ENCODE measurements at regions of chr2 and their contacts with region 1.

Region 1: DNA sequence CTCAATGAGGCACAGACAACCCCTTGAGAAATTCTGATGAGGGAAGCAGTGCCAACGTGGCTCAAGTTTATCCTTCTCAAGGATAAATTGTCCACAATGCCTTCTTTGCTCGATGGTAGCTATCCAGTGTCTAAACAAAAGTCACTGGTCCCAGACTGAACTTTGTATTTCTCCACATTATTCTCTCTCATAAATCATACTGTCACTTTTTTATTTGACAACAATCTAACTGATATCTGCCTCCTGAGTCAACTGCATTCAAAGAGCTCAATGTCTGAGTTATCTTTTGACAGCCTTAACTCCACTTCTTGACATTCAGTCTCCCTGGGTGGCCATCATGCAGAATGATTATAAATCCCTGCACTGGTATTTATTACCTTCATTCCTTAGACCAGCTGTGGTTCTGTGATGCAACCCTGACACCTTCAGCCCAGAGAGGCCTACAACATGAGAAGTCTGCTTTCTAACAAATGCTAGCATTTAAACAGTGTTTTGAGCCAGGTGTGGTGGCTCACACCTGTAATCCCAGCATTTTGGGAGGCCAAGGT is 38.2 kb downstream of the IMMT start:
- DNase-seq: no peak
- H3K4me3 Mint-ChIP-seq: no peak overlapping the region
- H3K27ac Mint-ChIP-seq: no peak overlapping the region
- H3K4me1 Mint-ChIP-seq: no peaks in the 10 kb centered on the region
- H3K27me3 Mint-ChIP-seq: no peaks in the 10 kb centered on the region

Region 2: DNA sequence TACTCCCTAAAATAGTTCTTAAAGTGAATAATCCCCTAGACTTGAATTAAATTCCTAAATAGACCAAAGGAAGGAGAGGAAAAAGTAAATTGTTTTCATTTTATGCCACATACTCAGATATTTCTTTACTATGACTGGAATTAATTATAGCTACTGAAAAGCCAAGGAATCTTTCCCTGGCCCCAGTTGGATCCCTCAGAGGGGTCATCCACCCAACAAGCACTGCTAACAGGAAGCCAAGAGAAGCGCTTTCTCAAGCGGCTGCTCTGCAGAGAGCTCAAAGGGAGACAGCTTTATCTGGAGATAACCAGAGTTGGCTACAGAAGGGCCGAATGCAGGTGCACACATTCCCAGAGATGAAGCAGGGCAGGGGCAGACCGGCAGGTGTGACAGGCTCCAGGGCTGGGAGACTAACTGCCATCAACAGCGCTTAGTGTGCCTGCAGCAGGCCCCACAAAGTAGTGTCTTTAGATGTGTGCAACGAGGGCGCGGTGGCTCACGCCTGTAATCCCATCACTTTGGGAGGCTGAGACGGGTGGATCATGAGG is 102.5 kb before region 1 on chr2:
- intact Hi-C with region 1: no loop called
- DNase-seq: no peak
- H3K4me3 Mint-ChIP-seq: no peak overlapping the region
- H3K27ac Mint-ChIP-seq: no peak overlapping the region
- H3K4me1 Mint-ChIP-seq: no peaks in the 10 kb centered on the region
- H3K27me3 Mint-ChIP-seq: no peaks in the 10 kb centered on the region

Region 3: DNA sequence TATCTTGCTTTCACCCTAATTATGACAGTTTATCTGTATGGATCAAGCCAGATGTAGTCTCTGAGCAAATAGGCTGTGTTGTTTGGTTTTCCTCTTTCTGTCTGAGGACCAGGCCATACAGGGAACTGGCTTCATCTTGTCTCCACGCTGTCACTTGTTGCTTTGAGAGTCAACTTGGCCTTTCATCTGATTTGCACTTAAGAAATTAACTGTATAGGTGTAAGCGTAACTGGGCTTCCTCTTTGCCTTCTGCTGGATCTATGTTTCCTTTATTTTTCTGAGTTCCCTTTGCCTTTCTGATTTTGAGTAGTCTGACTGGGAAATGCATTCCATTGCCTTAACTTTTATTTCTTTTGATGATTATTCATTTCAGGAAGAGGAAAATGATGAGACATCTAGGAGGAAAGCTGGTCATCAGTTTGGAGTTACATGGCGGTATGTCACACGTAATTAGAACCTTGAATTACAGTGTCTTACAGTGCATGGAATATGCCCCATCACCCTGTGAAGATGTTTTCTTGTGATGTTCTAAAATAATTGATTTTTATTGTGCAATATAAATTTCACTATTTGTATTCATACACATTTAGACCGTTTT is 33.7 kb before region 1 on chr2:
- intact Hi-C with region 1: loop called (anchors 5 kb)
- DNase-seq: no peak
- H3K4me3 Mint-ChIP-seq: no peak overlapping the region
- H3K27ac Mint-ChIP-seq: no peak overlapping the region
- H3K4me1 Mint-ChIP-seq: peaks cover 9% of the 10 kb centered on the region
- H3K27me3 Mint-ChIP-seq: no peaks in the 10 kb centered on the region